ENCODE measurements at regions of chr1 and their contacts with region 1.

Region 1: GRCh38 chr1:28877132-28877781 is 37.1 kb upstream of the EPB41 start:
- DNase-seq: peak in 1 of 2 donors; percentile 83
- H3K4me3 ChIP-seq: no peak overlapping the region
- H3K27ac ChIP-seq: no peak overlapping the region
- H3K4me1 ChIP-seq: peaks cover 0 to under 1% of the 10 kb centered on the region in 2 donors
- H3K27me3 ChIP-seq: no peaks in the 10 kb centered on the region
- CTCF ChIP-seq: peak; percentile 78 to 89 (median 88)

Region 2: GRCh38 chr1:28779751-28780408 is 97.4 kb before region 1 on chr1:
- intact Hi-C with region 1: loop called (anchors 1 kb)
- DNase-seq: no peak
- H3K4me3 ChIP-seq: no peak overlapping the region
- H3K27ac ChIP-seq: no peak overlapping the region
- H3K4me1 ChIP-seq: peaks cover 0 to 5% of the 10 kb centered on the region in 2 donors
- H3K27me3 ChIP-seq: no peaks in the 10 kb centered on the region
- CTCF ChIP-seq: no peak

Region 3: GRCh38 chr1:29195881-29196291 is 318.6 kb after region 1 on chr1:
- intact Hi-C with region 1: no loop called
- DNase-seq: no peak
- H3K4me3 ChIP-seq: no peak overlapping the region
- H3K27ac ChIP-seq: no peak overlapping the region
- H3K4me1 ChIP-seq: no peaks in the 10 kb centered on the region
- H3K27me3 ChIP-seq: no peaks in the 10 kb centered on the region
- CTCF ChIP-seq: no peak

Measured in ascending aorta (tissue), 2 donors.